Prostate gland (tissue), 2 donors: ENCODE measurements at regions of chr1 and their contacts with region 1.

Region 1: GRCh38 chr1:66996018-66996682 is 57.8 kb downstream of the SLC35D1 start:
- DNase-seq: peak; percentile 53
- H3K4me3 ChIP-seq: no peak overlapping the region
- H3K27ac ChIP-seq: no peak overlapping the region
- H3K4me1 ChIP-seq: no peaks in the 10 kb centered on the region
- H3K27me3 ChIP-seq: no peaks in the 10 kb centered on the region
- CTCF ChIP-seq: peak; percentile 32 to 74 (median 67)
- POLR2A ChIP-seq: no peak

Region 2: DNA sequence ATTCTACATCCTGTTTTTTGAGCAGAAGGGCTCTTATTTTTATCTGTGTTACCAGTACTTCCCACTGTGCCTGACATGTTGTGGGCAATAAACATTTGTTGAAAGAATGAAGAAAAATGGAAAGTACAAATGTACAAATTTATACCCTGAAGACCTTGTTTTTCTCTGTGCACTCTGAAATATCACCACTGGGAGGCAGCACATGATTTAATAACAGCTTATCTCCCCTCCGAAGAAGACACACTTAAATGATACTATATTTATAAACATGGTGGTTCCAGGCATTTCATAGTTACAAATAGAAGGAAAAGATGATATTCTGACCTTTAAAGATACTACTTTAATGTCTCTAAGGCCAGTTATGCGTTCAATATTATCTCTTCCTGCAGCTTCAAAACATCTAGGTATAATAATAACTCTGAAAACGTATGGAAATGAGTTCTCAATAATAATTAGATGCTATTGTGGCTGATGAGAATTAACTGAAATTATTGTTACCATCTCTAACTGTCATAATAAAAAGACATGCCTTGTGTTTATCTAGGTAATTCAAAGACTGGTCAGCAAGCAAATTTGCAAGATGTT is 231.1 kb before region 1 on chr1:
- intact Hi-C with region 1: loop called (anchors 5 kb)
- DNase-seq: peak; percentile 16
- H3K4me3 ChIP-seq: no peak overlapping the region
- H3K27ac ChIP-seq: no peak overlapping the region
- H3K4me1 ChIP-seq: no peaks in the 10 kb centered on the region
- H3K27me3 ChIP-seq: no peaks in the 10 kb centered on the region
- CTCF ChIP-seq: peak; percentile 18 to 77 (median 64)
- POLR2A ChIP-seq: no peak